ENCODE measurements at regions of chr16 and their contacts with region 1.

Region 1: DNA sequence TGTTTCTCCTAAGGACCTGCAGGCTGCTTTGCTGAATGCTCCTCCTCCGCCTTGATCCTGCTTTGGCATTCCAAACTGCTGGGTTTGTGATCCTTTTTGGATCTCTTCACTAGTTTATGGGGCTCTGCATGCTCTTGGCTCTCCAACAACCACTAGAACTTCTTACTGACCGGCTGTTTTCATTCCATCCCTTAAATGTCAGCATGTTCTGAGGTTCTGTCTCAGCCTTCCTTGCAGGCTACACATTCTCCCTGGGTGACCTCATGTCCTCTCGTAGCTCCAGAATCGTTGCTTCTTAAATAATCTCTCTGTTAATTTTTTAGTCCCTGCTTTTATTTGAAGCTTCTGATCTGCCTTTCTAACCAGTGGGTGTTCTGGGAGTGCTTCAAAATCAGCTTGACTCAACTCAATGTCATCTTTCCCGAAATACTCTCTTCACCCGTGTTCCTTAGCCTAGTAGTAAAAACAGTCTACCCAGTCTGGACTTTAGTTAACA is 119.0 kb upstream of the HS3ST2 start:
- DNase-seq: no peak
- ATAC-seq: no peak
- H3K4me3 ChIP-seq: no peak overlapping the region
- H3K4me3 Mint-ChIP-seq: no peak overlapping the region
- H3K27ac ChIP-seq: no peak overlapping the region
- H3K27ac Mint-ChIP-seq: no peak overlapping the region
- H3K4me1 ChIP-seq: no peaks in the 10 kb centered on the region
- H3K4me1 Mint-ChIP-seq: no peaks in the 10 kb centered on the region
- H3K27me3 ChIP-seq: no peaks in the 10 kb centered on the region
- H3K27me3 Mint-ChIP-seq: peaks cover 21% of the 10 kb centered on the region
- CTCF ChIP-seq: no peak

Region 2: GRCh38 chr16:21560462-21560861 is 1134.5 kb before region 1 on chr16:
- CTCF ChIA-PET with region 1: no interaction called
- POLR2A ChIA-PET with region 1: no interaction called
- intact Hi-C with region 1: loop called in 1 of 2 experiments (anchors 5 kb)
- DNase-seq: no peak
- ATAC-seq: no peak
- H3K4me3 ChIP-seq: no peak overlapping the region
- H3K4me3 Mint-ChIP-seq: no peak overlapping the region
- H3K27ac ChIP-seq: no peak overlapping the region
- H3K27ac Mint-ChIP-seq: no peak overlapping the region
- H3K4me1 ChIP-seq: no peaks in the 10 kb centered on the region
- H3K4me1 Mint-ChIP-seq: no peaks in the 10 kb centered on the region
- H3K27me3 ChIP-seq: no peaks in the 10 kb centered on the region
- H3K27me3 Mint-ChIP-seq: no peaks in the 10 kb centered on the region
- CTCF ChIP-seq: no peak

Region 3: DNA sequence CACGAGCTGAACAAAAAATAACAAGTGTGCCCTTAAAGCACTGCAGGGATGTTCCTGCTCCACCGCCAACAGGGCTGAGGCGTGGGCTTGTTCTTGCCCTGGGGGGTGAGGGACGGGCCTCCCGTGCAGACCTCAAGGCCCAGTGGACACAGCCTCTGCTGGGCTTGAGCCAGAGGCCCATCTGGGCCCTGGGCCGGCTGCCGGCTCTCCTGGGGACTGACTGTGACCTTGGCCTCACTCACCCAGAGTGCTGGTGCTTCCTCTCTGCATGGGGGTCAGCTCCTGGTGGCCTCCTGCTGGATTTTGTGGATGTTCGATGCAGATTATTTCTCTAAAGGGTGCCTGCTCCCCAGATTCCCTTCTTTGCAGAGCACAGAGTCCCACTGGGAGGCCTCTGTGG is 266.3 kb before region 1 on chr16:
- CTCF ChIA-PET with region 1: no interaction called
- POLR2A ChIA-PET with region 1: no interaction called
- intact Hi-C with region 1: no loop called
- DNase-seq: no peak
- ATAC-seq: no peak
- H3K4me3 ChIP-seq: no peak overlapping the region
- H3K4me3 Mint-ChIP-seq: no peak overlapping the region
- H3K27ac ChIP-seq: no peak overlapping the region
- H3K27ac Mint-ChIP-seq: no peak overlapping the region
- H3K4me1 ChIP-seq: no peaks in the 10 kb centered on the region
- H3K4me1 Mint-ChIP-seq: no peaks in the 10 kb centered on the region
- H3K27me3 ChIP-seq: no peaks in the 10 kb centered on the region
- H3K27me3 Mint-ChIP-seq: no peaks in the 10 kb centered on the region
- CTCF ChIP-seq: no peak

Region 4: DNA sequence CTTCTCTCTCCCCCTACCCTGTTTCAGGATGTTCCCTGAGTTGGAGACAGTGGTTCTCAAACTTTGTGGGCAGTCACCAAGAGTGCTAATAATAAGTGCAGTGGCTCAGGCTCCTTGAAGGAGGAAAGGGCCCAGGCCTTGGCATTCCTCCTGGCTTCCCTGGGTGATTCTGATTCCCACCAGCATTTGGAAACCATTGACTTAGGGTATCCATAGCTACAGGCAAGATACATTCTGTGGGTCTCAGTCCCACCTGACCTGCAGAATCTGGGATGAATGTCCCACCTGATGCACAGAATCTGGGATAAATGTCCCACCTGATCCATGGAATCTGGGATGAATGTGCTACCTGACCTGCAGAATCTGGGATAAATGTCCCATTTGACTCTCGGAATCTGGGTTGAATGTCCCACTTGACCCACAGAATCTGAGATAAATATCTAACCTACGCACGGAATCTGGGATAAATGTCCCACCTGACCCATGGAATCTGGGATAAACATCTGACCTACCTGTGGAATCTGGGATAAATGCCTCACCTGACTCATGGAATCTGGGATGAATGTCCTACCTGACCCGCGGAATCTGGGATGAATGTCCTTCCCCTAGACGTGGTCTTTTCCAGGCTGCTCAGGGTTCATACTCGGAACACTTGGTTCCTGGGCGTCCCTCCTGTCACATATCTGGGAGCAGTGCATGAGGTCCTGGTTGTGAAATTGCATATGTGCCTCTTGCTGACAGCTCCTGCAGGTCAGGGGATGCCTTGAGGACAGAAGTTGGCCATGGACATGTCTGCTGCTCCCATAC is 17.7 kb before region 1 on chr16:
- CTCF ChIA-PET with region 1: no interaction called
- POLR2A ChIA-PET with region 1: no interaction called
- intact Hi-C with region 1: no loop called
- DNase-seq: no peak
- ATAC-seq: no peak
- H3K4me3 ChIP-seq: no peak overlapping the region
- H3K4me3 Mint-ChIP-seq: no peak overlapping the region
- H3K27ac ChIP-seq: no peak overlapping the region
- H3K27ac Mint-ChIP-seq: no peak overlapping the region
- H3K4me1 ChIP-seq: no peaks in the 10 kb centered on the region
- H3K4me1 Mint-ChIP-seq: no peaks in the 10 kb centered on the region
- H3K27me3 ChIP-seq: peaks cover 2 to 8% of the 10 kb centered on the region in 2 experiments
- H3K27me3 Mint-ChIP-seq: peaks cover 5% of the 10 kb centered on the region
- CTCF ChIP-seq: no peak